Activated CD4-positive, alpha-beta T cell treated with anti-CD3 and anti-CD28 coated beads for 36 hours (primary cell): ENCODE measurements at regions of chr13 and their contacts with region 1.

Region 1: GRCh38 chr13:28636674-28637317 is 22.1 kb upstream of the POMP start:
- DNase-seq: peak; percentile 75
- ATAC-seq: peak; percentile 92
- H3K4me3 Mint-ChIP-seq: peak overlapping the region; percentile 0
- H3K27ac Mint-ChIP-seq: no peak overlapping the region
- H3K4me1 Mint-ChIP-seq: peaks cover 12% of the 10 kb centered on the region
- H3K27me3 Mint-ChIP-seq: peaks cover 16% of the 10 kb centered on the region

Region 2: GRCh38 chr13:28067491-28067890 is 569.3 kb before region 1 on chr13:
- CTCF ChIA-PET with region 1: no interaction called
- POLR2A ChIA-PET with region 1: no interaction called
- intact Hi-C with region 1: loop called in 1 of 2 experiments (anchors 10 kb)
- DNase-seq: no peak
- ATAC-seq: no peak
- H3K4me3 Mint-ChIP-seq: no peak overlapping the region
- H3K27ac Mint-ChIP-seq: no peak overlapping the region
- H3K4me1 Mint-ChIP-seq: peaks cover 4% of the 10 kb centered on the region
- H3K27me3 Mint-ChIP-seq: peaks cover 3% of the 10 kb centered on the region

Region 3: GRCh38 chr13:28384789-28385188 is 252.0 kb before region 1 on chr13:
- CTCF ChIA-PET with region 1: no interaction called
- POLR2A ChIA-PET with region 1: no interaction called
- intact Hi-C with region 1: no loop called
- DNase-seq: no peak
- ATAC-seq: no peak
- H3K4me3 Mint-ChIP-seq: no peak overlapping the region
- H3K27ac Mint-ChIP-seq: no peak overlapping the region
- H3K4me1 Mint-ChIP-seq: no peaks in the 10 kb centered on the region
- H3K27me3 Mint-ChIP-seq: peaks cover 2% of the 10 kb centered on the region

Region 4: GRCh38 chr13:28401303-28402056 is 235.3 kb before region 1 on chr13:
- CTCF ChIA-PET with region 1: no interaction called
- POLR2A ChIA-PET with region 1: no interaction called
- intact Hi-C with region 1: loop called in 1 of 2 experiments (anchors 10 kb)
- DNase-seq: no peak
- ATAC-seq: peak; percentile 60
- H3K4me3 Mint-ChIP-seq: no peak overlapping the region
- H3K27ac Mint-ChIP-seq: peak overlapping the region; percentile 47
- H3K4me1 Mint-ChIP-seq: peaks cover 9% of the 10 kb centered on the region
- H3K27me3 Mint-ChIP-seq: peaks cover 2% of the 10 kb centered on the region

Region 5: GRCh38 chr13:28527411-28528028 is 109.3 kb before region 1 on chr13:
- CTCF ChIA-PET with region 1: interaction called, 3 read pairs
- POLR2A ChIA-PET with region 1: interaction called, 8 read pairs
- intact Hi-C with region 1: loop called (anchors 1 to 10 kb)
- DNase-seq: no peak
- ATAC-seq: no peak
- H3K4me3 Mint-ChIP-seq: no peak overlapping the region
- H3K27ac Mint-ChIP-seq: no peak overlapping the region
- H3K4me1 Mint-ChIP-seq: peaks cover 25% of the 10 kb centered on the region
- H3K27me3 Mint-ChIP-seq: peaks cover 19% of the 10 kb centered on the region